ENCODE measurements at regions of chr9 and their contacts with region 1.

Region 1: DNA sequence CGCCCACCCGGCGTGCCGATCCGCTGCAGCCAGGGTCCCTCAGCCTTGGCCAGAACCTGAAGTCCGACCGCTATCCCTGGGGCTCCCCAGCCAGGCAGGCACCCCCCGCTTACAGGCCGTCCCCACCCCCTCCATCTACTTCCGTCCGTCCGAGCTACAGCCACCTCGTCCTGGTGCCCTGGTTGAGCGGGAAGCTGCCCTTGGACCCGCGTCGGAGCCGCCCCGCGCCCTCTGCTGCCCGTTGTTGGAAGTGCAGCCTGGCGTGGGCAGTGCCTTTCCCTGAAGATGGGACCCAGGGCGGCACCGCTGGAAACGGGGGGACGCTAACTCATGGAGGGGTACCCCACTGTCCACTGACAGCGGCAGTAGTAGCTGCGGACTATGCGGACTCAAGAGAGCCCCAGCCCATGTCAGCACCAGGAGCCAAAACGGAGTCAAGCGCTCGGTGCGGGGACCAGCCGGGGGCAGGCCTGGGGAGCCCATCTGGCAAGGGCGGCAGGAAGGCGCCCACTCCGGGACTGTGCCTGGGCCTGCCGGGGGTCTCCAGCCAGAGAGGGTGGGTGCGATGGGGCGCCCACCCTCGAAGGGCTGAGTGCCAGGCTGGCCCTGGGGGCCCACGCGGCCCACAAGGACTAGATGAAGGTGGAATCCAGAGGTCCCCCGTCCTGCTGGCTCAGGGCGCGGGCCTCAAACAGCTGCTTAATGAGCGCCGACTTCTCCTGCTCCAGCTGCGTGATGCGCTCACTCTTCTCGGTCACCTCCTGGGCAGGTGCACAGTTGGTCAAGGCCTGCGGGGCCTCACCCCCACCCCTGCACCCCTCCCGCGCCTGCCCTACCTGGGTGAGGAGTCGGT is 6.1 kb downstream of the SAPCD2 start:
- DNase-seq: peak in 1 of 2 experiments; percentile 95
- H3K4me3 ChIP-seq: no peak overlapping the region
- H3K27ac ChIP-seq: no peak overlapping the region
- H3K4me1 ChIP-seq: peaks cover 0 to 13% (median 7%) of the 10 kb centered on the region in 4 experiments; a peak in 5 of 7 replicates
- H3K27me3 ChIP-seq: peaks cover 0 to 8% (median 2%) of the 10 kb centered on the region in 4 experiments; a peak in 5 of 7 replicates
- CTCF ChIP-seq: peak in 2 of 3 experiments; percentile 88 to 95; a peak in 3 of 4 replicates
- EP300 ChIP-seq: no peak
- POLR2A ChIP-seq: no peak
- RAD21 ChIP-seq: peak; percentile 61 to 72

Region 2: DNA sequence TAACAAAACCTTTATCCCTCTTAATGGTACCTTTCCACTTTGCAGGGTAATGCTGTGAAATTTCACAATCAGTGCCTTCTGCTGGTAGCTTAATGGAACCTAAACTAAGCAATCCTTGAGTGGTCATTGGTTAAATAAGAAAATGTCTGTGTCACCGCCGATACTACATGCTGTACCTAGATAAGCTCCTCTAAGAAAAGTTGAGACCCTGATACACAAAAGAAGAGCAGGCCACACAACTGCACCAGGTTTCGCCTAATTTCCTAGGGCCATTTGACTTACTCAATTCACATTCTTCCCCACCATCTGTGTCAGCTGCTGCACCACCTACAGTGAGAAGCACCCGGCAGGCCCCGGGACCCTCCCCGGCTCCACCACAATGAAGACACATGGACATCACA is 189.1 kb before region 1 on chr9:
- CTCF ChIA-PET with region 1: no interaction called
- POLR2A ChIA-PET with region 1: no interaction called
- DNase-seq: no peak
- H3K4me3 ChIP-seq: no peak overlapping the region
- H3K27ac ChIP-seq: no peak overlapping the region
- H3K4me1 ChIP-seq: no peaks in the 10 kb centered on the region
- H3K27me3 ChIP-seq: no peaks in the 10 kb centered on the region
- CTCF ChIP-seq: no peak
- EP300 ChIP-seq: no peak
- POLR2A ChIP-seq: no peak
- RAD21 ChIP-seq: no peak

Region 3: GRCh38 chr9:137000177-137000883 is 63.9 kb before region 1 on chr9:
- CTCF ChIA-PET with region 1: interaction called, 10 read pairs
- POLR2A ChIA-PET with region 1: no interaction called
- DNase-seq: no peak
- H3K4me3 ChIP-seq: no peak overlapping the region
- H3K27ac ChIP-seq: no peak overlapping the region
- H3K4me1 ChIP-seq: peaks cover 0 to 16% (median 8%) of the 10 kb centered on the region in 4 experiments; a peak in 6 of 7 replicates
- H3K27me3 ChIP-seq: no peaks in the 10 kb centered on the region; a peak in 1 of 7 replicates
- CTCF ChIP-seq: no peak
- EP300 ChIP-seq: no peak
- POLR2A ChIP-seq: no peak
- RAD21 ChIP-seq: no peak

Region 4: GRCh38 chr9:137077010-137077747 is 12.9 kb after region 1 on chr9 and contains the start of gene UAP1L1:
- CTCF ChIA-PET with region 1: interaction called, 156 read pairs
- POLR2A ChIA-PET with region 1: interaction called, 7 read pairs
- DNase-seq: peak in 1 of 2 experiments; percentile 78
- H3K4me3 ChIP-seq: peak within 1 kb of the TSS; percentile 33 to 57 (median 42)
- H3K27ac ChIP-seq: no peak within 1 kb of the TSS
- H3K4me1 ChIP-seq: peaks cover 0 to 20% (median 12%) of the 10 kb centered on the region in 4 experiments; a peak in 6 of 7 replicates
- H3K27me3 ChIP-seq: peaks cover 20 to 50% (median 34%) of the 10 kb centered on the region in 4 experiments
- CTCF ChIP-seq: no peak
- EP300 ChIP-seq: no peak
- POLR2A ChIP-seq: no peak
- RAD21 ChIP-seq: no peak
- total RNA-seq, gene UAP1L1: 5.4 and 5.5 TPM in 2 replicates

Region 5: GRCh38 chr9:137086531-137087408 is 22.5 kb after region 1 on chr9 and contains the start of gene MAN1B1:
- CTCF ChIA-PET with region 1: interaction called, 80 read pairs
- POLR2A ChIA-PET with region 1: interaction called, 5 read pairs
- DNase-seq: peak; percentile 97 to 99
- H3K4me3 ChIP-seq: peak within 1 kb of the TSS; percentile 55 to 81 (median 71)
- H3K27ac ChIP-seq: no peak within 1 kb of the TSS
- H3K4me1 ChIP-seq: peaks cover 0 to 10% (median 4%) of the 10 kb centered on the region in 4 experiments; a peak in 4 of 7 replicates
- H3K27me3 ChIP-seq: peaks cover 0 to 11% (median 3%) of the 10 kb centered on the region in 4 experiments; a peak in 5 of 7 replicates
- CTCF ChIP-seq: peak in 1 of 3 experiments; percentile 6; a peak in 1 of 4 replicates
- EP300 ChIP-seq: no peak
- POLR2A ChIP-seq: peak in 1 of 2 experiments; percentile 73; a peak in 1 of 3 replicates
- RAD21 ChIP-seq: no peak
- total RNA-seq, gene MAN1B1: 35.1 and 36.3 TPM in 2 replicates

Region 6: GRCh38 chr9:137138722-137139467 is 74.6 kb after region 1 on chr9 and contains the start of gene GRIN1:
- CTCF ChIA-PET with region 1: interaction called, 14 read pairs
- POLR2A ChIA-PET with region 1: no interaction called
- DNase-seq: peak in 1 of 2 experiments; percentile 77
- H3K4me3 ChIP-seq: peak within 1 kb of the TSS in 2 of 4 experiments; percentile 38 to 44; a peak in 4 of 8 replicates
- H3K27ac ChIP-seq: no peak within 1 kb of the TSS
- H3K4me1 ChIP-seq: peaks cover 0 to 14% (median 11%) of the 10 kb centered on the region in 4 experiments; a peak in 6 of 7 replicates
- H3K27me3 ChIP-seq: peaks cover 25 to 79% (median 72%) of the 10 kb centered on the region in 4 experiments
- CTCF ChIP-seq: no peak
- EP300 ChIP-seq: no peak
- POLR2A ChIP-seq: no peak
- RAD21 ChIP-seq: no peak
- total RNA-seq, gene GRIN1: 2.1 TPM in 2 replicates

Measured in H1 (cell line).